CD8-positive, alpha-beta T cell (primary cell): ENCODE measurements at regions of chr19 and their contacts with region 1.

Region 1: GRCh38 chr19:40662921-40663694 is 27.3 kb downstream of the NUMBL start:
- DNase-seq: peak; percentile 86 to 98 (median 94)
- ATAC-seq: peak; percentile 82
- H3K4me3 ChIP-seq: peak overlapping the region; percentile 66 to 67
- H3K4me3 Mint-ChIP-seq: peak overlapping the region; percentile 87
- H3K27ac ChIP-seq: peak overlapping the region; percentile 49 to 70
- H3K27ac Mint-ChIP-seq: peak overlapping the region; percentile 80
- H3K4me1 ChIP-seq: peaks cover 11% of the 10 kb centered on the region
- H3K4me1 Mint-ChIP-seq: peaks cover 8% of the 10 kb centered on the region
- H3K27me3 ChIP-seq: no peaks in the 10 kb centered on the region
- H3K27me3 Mint-ChIP-seq: no peaks in the 10 kb centered on the region
- CTCF ChIP-seq: peak; percentile 95

Region 2: DNA sequence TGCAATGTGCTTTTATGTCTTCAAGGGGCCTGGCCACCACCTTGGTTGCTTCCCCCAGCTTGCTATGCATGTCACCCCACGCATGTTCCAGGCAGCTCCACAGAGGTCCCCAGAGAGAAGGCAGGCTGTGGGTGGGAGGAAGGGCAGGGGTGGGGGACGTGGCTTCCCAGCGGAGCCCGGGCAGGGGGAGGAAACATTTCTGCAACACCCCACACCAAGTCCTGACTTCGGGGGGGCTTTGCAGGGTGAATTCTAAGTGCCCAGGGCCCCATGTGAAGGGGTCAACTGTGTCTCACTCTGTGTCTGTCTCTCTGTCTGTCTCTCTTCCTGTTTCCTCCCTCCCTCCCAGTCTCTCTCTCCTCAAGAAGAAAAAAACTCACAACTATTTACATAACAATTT is 22.4 kb before region 1 on chr19:
- CTCF ChIA-PET with region 1: interaction called, 16 read pairs
- POLR2A ChIA-PET with region 1: no interaction called
- intact Hi-C with region 1: no loop called
- DNase-seq: peak in 1 of 9 experiments; percentile 52
- ATAC-seq: peak; percentile 26
- H3K4me3 ChIP-seq: no peak overlapping the region
- H3K4me3 Mint-ChIP-seq: no peak overlapping the region
- H3K27ac ChIP-seq: no peak overlapping the region
- H3K27ac Mint-ChIP-seq: no peak overlapping the region
- H3K4me1 ChIP-seq: peaks cover 6% of the 10 kb centered on the region
- H3K4me1 Mint-ChIP-seq: peaks cover 11% of the 10 kb centered on the region
- H3K27me3 ChIP-seq: peaks cover 0 to 3% of the 10 kb centered on the region in 2 experiments
- H3K27me3 Mint-ChIP-seq: peaks cover 2% of the 10 kb centered on the region
- CTCF ChIP-seq: no peak

Region 3: DNA sequence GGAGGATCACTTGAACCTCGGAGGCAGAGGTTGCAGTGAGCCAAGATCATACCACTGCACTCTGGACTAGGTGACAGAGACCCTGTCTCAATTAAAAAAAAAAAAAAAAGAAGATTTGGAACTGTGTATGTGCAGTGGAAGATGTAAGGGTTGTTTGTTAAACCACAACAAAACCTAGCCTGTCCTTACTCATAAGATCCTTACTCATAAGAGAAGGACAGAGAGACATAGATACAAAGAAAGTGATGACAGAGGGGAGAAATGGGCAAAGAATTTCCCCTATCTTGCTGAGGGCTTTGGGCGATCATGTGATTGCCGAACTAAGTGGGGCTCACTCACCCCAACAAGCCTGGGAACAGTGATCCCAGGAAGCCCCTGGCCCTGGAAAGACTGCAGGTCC is 61.7 kb after region 1 on chr19:
- CTCF ChIA-PET with region 1: no interaction called
- POLR2A ChIA-PET with region 1: no interaction called
- intact Hi-C with region 1: no loop called
- DNase-seq: no peak
- ATAC-seq: no peak
- H3K4me3 ChIP-seq: no peak overlapping the region
- H3K4me3 Mint-ChIP-seq: no peak overlapping the region
- H3K27ac ChIP-seq: no peak overlapping the region
- H3K27ac Mint-ChIP-seq: no peak overlapping the region
- H3K4me1 ChIP-seq: peaks cover 8% of the 10 kb centered on the region
- H3K4me1 Mint-ChIP-seq: peaks cover 31% of the 10 kb centered on the region
- H3K27me3 ChIP-seq: no peaks in the 10 kb centered on the region
- H3K27me3 Mint-ChIP-seq: no peaks in the 10 kb centered on the region
- CTCF ChIP-seq: no peak

Region 4: GRCh38 chr19:40750059-40750873 is 87.2 kb after region 1 on chr19 and contains the start of gene ACTMAP:
- CTCF ChIA-PET with region 1: interaction called, 4 read pairs
- POLR2A ChIA-PET with region 1: interaction called, 8 read pairs
- intact Hi-C with region 1: loop called in 1 of 2 experiments (anchors 1 kb)
- DNase-seq: peak; percentile 98 to 100 (median 99)
- ATAC-seq: peak; percentile 87
- H3K4me3 ChIP-seq: peak within 1 kb of the TSS; percentile 75 to 87
- H3K4me3 Mint-ChIP-seq: peak within 1 kb of the TSS; percentile 93
- H3K27ac ChIP-seq: peak within 1 kb of the TSS; percentile 91 to 95
- H3K27ac Mint-ChIP-seq: peak within 1 kb of the TSS; percentile 98
- H3K4me1 ChIP-seq: peaks cover 36% of the 10 kb centered on the region
- H3K4me1 Mint-ChIP-seq: peaks cover 38% of the 10 kb centered on the region
- H3K27me3 ChIP-seq: no peaks in the 10 kb centered on the region
- H3K27me3 Mint-ChIP-seq: no peaks in the 10 kb centered on the region
- CTCF ChIP-seq: no peak
- total RNA-seq, gene ACTMAP: 3.5 to 3.8 TPM

Region 5: DNA sequence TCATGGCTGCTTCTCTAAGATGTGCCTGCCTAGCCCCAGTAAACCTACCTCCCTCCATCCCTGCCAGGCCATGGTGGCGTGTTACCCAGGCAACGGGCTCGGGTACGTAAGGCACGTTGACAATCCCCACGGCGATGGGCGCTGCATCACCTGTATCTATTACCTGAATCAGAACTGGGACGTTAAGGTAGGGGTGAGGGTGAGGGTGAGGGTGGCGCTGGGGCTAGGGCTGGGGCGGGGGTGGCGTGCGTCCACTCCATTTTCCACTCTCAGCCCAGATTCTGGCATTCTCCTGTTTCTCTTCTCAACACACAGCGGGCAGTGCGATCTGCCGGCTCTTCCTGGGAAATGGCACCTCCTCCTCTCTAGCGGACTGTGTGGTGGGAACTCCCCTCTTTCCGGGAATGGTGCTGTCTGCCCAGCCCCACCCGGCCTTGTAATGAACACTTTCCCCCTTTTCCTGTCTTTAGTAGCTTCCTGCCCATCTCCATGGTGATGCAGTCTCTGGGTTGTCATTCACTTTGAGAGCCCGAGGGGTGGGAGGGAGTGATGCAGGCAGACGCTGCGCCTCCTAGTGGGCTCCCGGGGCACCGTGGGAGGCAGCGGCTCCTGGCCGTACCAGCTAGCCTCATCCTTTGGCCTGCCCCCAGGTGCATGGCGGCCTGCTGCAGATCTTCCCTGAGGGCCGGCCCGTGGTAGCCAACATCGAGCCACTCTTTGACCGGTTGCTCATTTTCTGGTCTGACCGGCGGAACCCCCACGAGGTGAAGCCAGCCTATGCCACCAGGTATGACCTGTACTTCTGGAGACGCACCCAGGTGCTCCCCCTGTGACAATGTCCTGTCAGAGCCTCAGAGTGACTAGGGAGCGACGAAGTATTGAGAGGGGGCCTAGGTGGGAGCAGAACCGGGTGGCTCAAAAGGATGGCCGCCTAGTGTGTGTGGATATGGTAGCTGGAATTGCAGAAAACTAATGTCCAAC is 143.7 kb after region 1 on chr19:
- CTCF ChIA-PET with region 1: interaction called, 43 read pairs
- POLR2A ChIA-PET with region 1: interaction called, 6 read pairs
- intact Hi-C with region 1: loop called in 1 of 2 experiments (anchors 2 kb)
- DNase-seq: peak; percentile 54 to 95 (median 81)
- ATAC-seq: peak; percentile 48
- H3K4me3 ChIP-seq: peak overlapping the region in 1 of 2 experiments; percentile 35
- H3K4me3 Mint-ChIP-seq: peak overlapping the region; percentile 83
- H3K27ac ChIP-seq: peak overlapping the region; percentile 66 to 88
- H3K27ac Mint-ChIP-seq: peak overlapping the region; percentile 99
- H3K4me1 ChIP-seq: peaks cover 86% of the 10 kb centered on the region
- H3K4me1 Mint-ChIP-seq: peaks cover 87% of the 10 kb centered on the region
- H3K27me3 ChIP-seq: no peaks in the 10 kb centered on the region
- H3K27me3 Mint-ChIP-seq: no peaks in the 10 kb centered on the region
- CTCF ChIP-seq: peak; percentile 87

Region 6: DNA sequence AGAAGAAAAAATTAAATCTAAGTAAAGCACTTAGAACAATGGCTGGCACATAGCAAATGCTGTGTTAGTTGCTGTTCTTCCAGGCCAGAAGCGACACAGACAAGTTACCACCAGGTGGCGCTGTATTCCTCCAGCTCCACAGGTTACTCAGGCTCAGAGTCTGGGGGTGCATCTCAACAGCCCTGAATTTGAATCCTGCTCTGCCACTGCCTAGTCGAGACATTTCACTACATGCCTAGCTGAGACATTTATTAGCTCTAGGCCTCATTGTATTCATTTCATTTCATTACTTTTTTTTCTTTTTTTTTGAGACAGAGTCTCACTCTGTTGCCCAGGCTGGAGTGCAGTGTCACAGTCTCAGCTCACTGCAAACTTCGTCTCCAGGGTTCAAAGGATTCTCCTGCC is 311.5 kb after region 1 on chr19:
- CTCF ChIA-PET with region 1: interaction called, 5 read pairs
- POLR2A ChIA-PET with region 1: interaction called, 5 read pairs
- intact Hi-C with region 1: loop called (anchors 5 kb)
- DNase-seq: peak; percentile 61 to 90 (median 80)
- ATAC-seq: peak; percentile 72
- H3K4me3 ChIP-seq: no peak overlapping the region
- H3K4me3 Mint-ChIP-seq: no peak overlapping the region
- H3K27ac ChIP-seq: no peak overlapping the region
- H3K27ac Mint-ChIP-seq: no peak overlapping the region
- H3K4me1 ChIP-seq: peaks cover 22% of the 10 kb centered on the region
- H3K4me1 Mint-ChIP-seq: peaks cover 29% of the 10 kb centered on the region
- H3K27me3 ChIP-seq: no peaks in the 10 kb centered on the region
- H3K27me3 Mint-ChIP-seq: peaks cover 10% of the 10 kb centered on the region
- CTCF ChIP-seq: peak; percentile 92

Region 7: DNA sequence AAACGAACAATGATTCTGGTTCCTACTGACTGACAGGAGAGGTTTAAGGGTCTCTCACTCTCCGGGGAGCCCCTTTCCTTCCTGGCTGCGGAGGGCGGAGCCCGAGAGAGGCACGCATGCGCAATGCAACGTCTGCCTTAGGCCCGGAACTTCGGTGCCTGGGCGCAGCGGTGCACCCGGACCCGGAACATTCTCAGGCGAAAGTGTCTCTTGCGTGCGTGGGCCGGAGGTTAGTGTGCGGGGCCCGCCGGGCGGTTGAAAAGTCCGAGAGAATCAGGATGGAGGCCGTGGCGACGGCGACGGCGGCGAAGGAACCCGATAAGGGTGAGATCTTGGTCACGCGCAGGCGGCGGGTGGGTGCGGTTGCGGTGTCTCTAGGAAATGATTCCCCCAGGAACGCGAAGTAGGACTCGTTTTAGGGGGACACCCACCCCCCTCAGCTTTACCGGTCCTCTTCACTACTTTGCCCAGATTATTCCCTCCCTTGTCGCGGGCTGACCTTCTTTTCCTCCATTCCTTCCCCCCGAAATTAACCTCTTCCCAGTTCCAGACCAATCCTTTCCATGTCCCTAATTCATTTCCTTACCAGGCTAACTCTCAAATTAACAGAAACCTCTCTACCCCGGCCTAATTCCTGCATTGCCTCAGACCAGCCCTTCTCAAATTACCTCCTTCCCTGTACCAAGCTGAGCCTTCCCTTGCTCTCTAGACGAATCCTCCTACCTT is 647.1 kb after region 1 on chr19 and contains the start of gene CCDC97:
- CTCF ChIA-PET with region 1: interaction called, 3 read pairs
- POLR2A ChIA-PET with region 1: interaction called, 3 read pairs
- intact Hi-C with region 1: loop called (anchors 1 kb)
- DNase-seq: peak; percentile 78 to 96 (median 90)
- ATAC-seq: peak; percentile 61
- H3K4me3 ChIP-seq: peak within 1 kb of the TSS; percentile 66 to 91
- H3K4me3 Mint-ChIP-seq: peak within 1 kb of the TSS; percentile 97
- H3K27ac ChIP-seq: peak within 1 kb of the TSS; percentile 88 to 93
- H3K27ac Mint-ChIP-seq: peak within 1 kb of the TSS; percentile 98
- H3K4me1 ChIP-seq: peaks cover 58% of the 10 kb centered on the region
- H3K4me1 Mint-ChIP-seq: peaks cover 74% of the 10 kb centered on the region
- H3K27me3 ChIP-seq: no peaks in the 10 kb centered on the region
- H3K27me3 Mint-ChIP-seq: no peaks in the 10 kb centered on the region
- CTCF ChIP-seq: no peak
- total RNA-seq, gene CCDC97: 32.0 to 33.5 TPM